ENCODE measurements at regions of chr5 and their contacts with region 1.

Region 1: GRCh38 chr5:124748687-124749594 is 2.5 kb upstream of the ZNF608 start:
- DNase-seq: peak; percentile 61 to 95 (median 86)

Region 2: DNA sequence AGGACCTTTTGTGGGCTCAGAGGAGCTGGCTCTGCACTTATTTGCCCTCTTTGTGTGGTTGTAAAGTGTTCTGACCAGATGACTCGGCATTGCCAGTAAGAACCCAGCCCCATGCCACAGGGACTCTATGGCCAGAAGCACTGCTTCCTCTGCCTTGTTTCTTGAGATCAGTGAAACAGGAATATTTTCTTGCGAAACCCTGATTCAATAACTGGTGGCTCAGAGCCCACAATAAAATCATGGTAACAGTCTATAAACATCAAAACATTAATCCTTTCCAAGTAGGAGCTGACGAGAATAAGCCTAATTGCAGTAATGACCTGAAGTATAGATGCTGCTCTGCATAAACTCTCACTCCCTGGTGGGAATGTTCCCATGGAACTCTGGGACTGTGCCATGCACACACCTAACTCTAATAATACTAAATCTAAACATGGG is 346.8 kb before region 1 on chr5:
- intact Hi-C with region 1: no loop called
- DNase-seq: peak in 9 of 42 donors; percentile 24 to 83 (median 49)

Region 3: GRCh38 chr5:124576848-124577409 is 172.0 kb before region 1 on chr5:
- intact Hi-C with region 1: loop called (anchors 10 kb)
- DNase-seq: no peak

Region 4: GRCh38 chr5:124902097-124902821 is 153.3 kb after region 1 on chr5:
- intact Hi-C with region 1: loop called (anchors 10 kb)
- DNase-seq: peak in 7 of 42 donors; percentile 14 to 59 (median 28)

Region 5: GRCh38 chr5:125412561-125413495 is 663.9 kb after region 1 on chr5:
- intact Hi-C with region 1: loop called (anchors 5 kb)
- DNase-seq: peak; percentile 76 to 96 (median 89)